ENCODE measurements at regions of chr6 and their contacts with region 1.

Region 1: GRCh38 chr6:118680452-118681095 is 29.2 kb upstream of the CEP85L start:
- DNase-seq: peak; percentile 20
- H3K4me3 Mint-ChIP-seq: peak overlapping the region; percentile 9
- H3K27ac Mint-ChIP-seq: peak overlapping the region; percentile 57
- H3K4me1 Mint-ChIP-seq: peaks cover 69% of the 10 kb centered on the region
- H3K27me3 Mint-ChIP-seq: no peaks in the 10 kb centered on the region

Region 2: GRCh38 chr6:118663993-118664985 is 16.3 kb before region 1 on chr6:
- intact Hi-C with region 1: loop called (anchors 1 kb)
- DNase-seq: no peak
- H3K4me3 Mint-ChIP-seq: peak overlapping the region; percentile 86
- H3K27ac Mint-ChIP-seq: peak overlapping the region; percentile 89
- H3K4me1 Mint-ChIP-seq: peaks cover 61% of the 10 kb centered on the region
- H3K27me3 Mint-ChIP-seq: no peaks in the 10 kb centered on the region

Region 3: GRCh38 chr6:118934461-118935330 is 254.1 kb after region 1 on chr6 and contains the start of gene MCM9:
- intact Hi-C with region 1: no loop called
- DNase-seq: peak; percentile 86
- H3K4me3 Mint-ChIP-seq: peak within 1 kb of the TSS; percentile 91
- H3K27ac Mint-ChIP-seq: peak within 1 kb of the TSS; percentile 93
- H3K4me1 Mint-ChIP-seq: peaks cover 40% of the 10 kb centered on the region
- H3K27me3 Mint-ChIP-seq: no peaks in the 10 kb centered on the region
- total RNA-seq, gene MCM9: 19.8 and 24.4 TPM in 2 replicates

Measured in activated T-helper 1 cell treated with anti-CD3 and anti-CD28 coated beads, Interleukin-12 subunit alpha, Interleukin-12 subunit beta, Interleukin-2, Interleukin-4 antibody, amounts not matched to agents 30 ng/mL and 10 ng/mL and 1 ng/mL, durations not matched to agents 14 hours and 24 hours and 36 hours (primary cell).